HepG2 (cell line): ENCODE measurements at regions of chr6 and their contacts with region 1.

Region 1: DNA sequence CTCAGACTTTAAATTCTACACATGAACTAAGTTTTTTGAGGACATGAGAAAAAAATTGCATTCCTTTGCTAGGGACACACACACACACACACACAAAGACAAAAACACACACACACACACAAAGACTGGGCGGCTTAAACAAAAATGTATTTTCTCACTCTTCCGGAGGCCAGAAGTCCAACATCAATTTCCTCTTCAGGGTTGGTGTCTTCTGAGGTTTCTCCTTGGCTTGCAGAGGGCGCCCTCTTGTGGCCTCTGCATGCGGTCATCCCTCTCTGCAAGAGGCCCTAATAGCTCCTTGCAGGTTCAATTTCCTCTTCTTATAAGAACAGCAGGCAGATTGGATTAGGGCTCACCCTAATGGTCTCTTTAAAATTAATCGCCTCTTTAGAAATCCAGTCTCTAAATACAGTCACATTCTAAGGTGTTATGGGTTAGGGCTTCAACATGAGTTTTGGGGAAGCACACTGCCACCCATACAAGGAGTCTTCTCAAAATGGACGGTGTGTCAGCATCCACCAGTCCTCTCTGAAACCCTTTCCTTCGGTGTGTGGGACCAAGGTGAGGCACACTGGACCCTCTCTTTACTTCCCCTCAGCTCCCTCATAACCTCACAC is 61.4 kb downstream of the GPR6 start:
- DNase-seq: peak; percentile 73
- ATAC-seq: peak; percentile 87
- H3K4me3 ChIP-seq: peak overlapping the region; percentile 23 to 35 (median 27); a peak in 4 of 6 replicates
- H3K27ac ChIP-seq: no peak overlapping the region
- H3K4me1 ChIP-seq: peaks cover 31% of the 10 kb centered on the region
- H3K27me3 ChIP-seq: peaks cover 0 to 2% of the 10 kb centered on the region in 2 experiments; a peak in 1 of 5 replicates
- CTCF ChIP-seq: peak; percentile 89
- EP300 ChIP-seq: no peak
- POLR2A ChIP-seq: no peak
- RAD21 ChIP-seq: peak; percentile 73

Region 2: GRCh38 chr6:109595998-109596397 is 443.5 kb before region 1 on chr6:
- CTCF ChIA-PET with region 1: interaction called, 3 read pairs
- POLR2A ChIA-PET with region 1: no interaction called
- in situ Hi-C with region 1: no loop called
- intact Hi-C with region 1: loop called (anchors 10 kb)
- DNase-seq: peak; percentile 26
- ATAC-seq: peak; percentile 67
- H3K4me3 ChIP-seq: no peak overlapping the region
- H3K27ac ChIP-seq: no peak overlapping the region
- H3K4me1 ChIP-seq: no peaks in the 10 kb centered on the region
- H3K27me3 ChIP-seq: no peaks in the 10 kb centered on the region
- CTCF ChIP-seq: peak; percentile 44
- EP300 ChIP-seq: no peak
- POLR2A ChIP-seq: no peak
- RAD21 ChIP-seq: no peak

Region 3: DNA sequence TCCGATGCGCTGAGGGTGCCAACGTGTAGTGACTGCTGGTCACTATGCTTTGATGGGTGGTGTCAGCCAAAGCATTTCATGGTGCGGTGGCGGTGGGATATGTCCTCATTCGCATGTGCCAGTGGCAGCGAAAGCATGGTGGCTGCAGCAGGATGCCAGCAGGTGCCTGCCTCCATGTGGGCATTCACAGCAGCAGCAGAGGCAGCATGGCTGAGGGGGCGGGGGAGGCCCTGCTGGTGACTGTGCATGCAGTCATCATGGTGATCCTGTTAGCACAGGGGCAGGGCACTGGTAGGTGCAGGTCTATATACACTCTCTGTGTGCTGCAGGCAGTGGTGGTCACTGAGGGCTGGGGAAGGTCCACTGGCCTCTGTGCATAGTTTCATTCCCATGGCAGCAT is 326.4 kb before region 1 on chr6:
- CTCF ChIA-PET with region 1: interaction called, 113 read pairs
- POLR2A ChIA-PET with region 1: no interaction called
- in situ Hi-C with region 1: loop called (anchors 5 kb)
- intact Hi-C with region 1: no loop called
- DNase-seq: no peak
- ATAC-seq: no peak
- H3K4me3 ChIP-seq: no peak overlapping the region
- H3K27ac ChIP-seq: no peak overlapping the region
- H3K4me1 ChIP-seq: no peaks in the 10 kb centered on the region
- H3K27me3 ChIP-seq: no peaks in the 10 kb centered on the region
- CTCF ChIP-seq: no peak
- EP300 ChIP-seq: no peak
- POLR2A ChIP-seq: no peak
- RAD21 ChIP-seq: no peak

Region 4: GRCh38 chr6:110389689-110390382 is 350.4 kb after region 1 on chr6:
- CTCF ChIA-PET with region 1: interaction called, 6 read pairs
- POLR2A ChIA-PET with region 1: no interaction called
- in situ Hi-C with region 1: loop called (anchors 10 kb)
- intact Hi-C with region 1: loop called (anchors 1 kb)
- DNase-seq: no peak
- ATAC-seq: no peak
- H3K4me3 ChIP-seq: no peak overlapping the region
- H3K27ac ChIP-seq: no peak overlapping the region
- H3K4me1 ChIP-seq: peaks cover 46% of the 10 kb centered on the region
- H3K27me3 ChIP-seq: no peaks in the 10 kb centered on the region
- CTCF ChIP-seq: no peak
- EP300 ChIP-seq: no peak
- POLR2A ChIP-seq: no peak
- RAD21 ChIP-seq: no peak